Cardiac septum (tissue), 1 donor: ENCODE measurements at regions of chr3 and their contacts with region 1.

Region 1: DNA sequence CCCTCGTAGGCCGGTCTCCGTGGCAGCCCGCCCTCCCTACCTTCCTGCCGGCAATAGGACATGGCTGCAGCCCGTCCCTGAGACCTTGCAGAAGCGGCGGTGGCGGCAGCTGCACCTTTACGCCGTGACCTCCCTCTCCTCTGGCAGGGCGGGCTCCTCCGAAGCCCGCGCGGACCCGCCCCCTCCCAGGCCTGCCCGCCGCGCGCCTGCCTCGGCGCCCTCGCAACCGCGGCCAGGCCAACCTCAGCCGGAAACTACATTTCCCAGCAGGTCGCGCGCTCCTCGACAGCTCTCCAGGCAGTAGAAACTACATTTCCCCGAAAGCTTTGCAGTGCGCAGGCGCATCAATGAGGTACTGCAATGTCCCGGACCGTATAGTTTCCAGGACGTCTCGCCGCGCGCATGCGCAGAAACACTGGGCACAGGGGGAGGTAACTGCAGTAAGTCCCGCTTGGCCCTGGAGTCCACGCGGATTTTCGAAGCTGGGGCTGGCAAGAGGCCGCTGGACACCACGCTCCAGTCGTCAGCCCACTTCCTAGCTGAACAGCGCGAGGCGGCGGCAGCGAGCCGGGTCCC is at the starts of genes CHCHD4 and TMEM43:
- DNase-seq: peak; percentile 100
- total RNA-seq, gene CHCHD4: 23.0 TPM
- total RNA-seq, gene TMEM43: 62.0 TPM

Region 2: DNA sequence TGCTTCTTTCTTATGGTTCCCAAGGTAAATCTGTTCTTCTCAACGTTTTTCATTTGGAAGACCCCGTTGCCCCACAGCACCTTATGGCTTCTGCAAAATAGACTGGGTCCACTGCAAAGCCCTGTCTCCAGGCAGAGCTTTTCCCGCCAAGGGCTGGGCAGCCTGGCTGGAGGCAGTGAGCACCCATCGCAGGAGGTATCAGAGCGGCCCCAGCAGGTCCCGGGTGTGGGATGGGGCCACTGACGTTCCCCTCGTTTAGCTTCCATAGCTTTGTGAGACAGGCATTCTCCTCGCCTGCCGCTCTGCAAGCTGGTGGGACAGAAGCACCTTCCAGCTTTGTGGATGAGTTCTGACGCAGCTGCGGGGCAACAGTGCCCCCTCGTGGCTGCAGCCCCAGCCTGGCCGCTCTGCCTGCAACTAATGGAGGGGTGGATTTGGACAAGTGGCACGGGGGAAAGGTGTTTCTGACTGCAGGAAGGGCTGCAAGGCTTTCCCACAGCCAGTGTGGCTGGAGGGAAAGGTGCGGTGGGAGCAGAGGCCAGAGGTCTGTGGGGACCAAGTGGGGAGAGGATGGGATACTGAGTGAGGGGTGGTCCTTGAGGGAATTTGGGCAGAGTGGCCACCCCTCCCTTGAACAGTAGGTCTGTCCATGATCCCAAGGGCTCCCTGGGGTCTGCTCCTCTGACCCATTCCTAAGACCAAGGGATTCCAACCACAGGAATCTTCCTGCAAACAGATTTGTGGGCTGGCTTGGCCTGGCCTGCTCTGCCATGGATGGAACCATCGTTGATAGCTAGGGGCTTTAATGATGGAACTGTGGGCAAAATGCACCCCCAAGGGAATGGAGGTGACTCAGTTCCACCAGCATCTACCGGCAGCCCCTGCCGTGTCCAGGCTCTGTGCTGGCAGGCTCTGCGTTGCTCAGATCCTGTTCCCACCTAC is 476.4 kb before region 1 on chr3:
- intact Hi-C with region 1: loop called (anchors 10 kb)
- DNase-seq: peak; percentile 86

Region 3: DNA sequence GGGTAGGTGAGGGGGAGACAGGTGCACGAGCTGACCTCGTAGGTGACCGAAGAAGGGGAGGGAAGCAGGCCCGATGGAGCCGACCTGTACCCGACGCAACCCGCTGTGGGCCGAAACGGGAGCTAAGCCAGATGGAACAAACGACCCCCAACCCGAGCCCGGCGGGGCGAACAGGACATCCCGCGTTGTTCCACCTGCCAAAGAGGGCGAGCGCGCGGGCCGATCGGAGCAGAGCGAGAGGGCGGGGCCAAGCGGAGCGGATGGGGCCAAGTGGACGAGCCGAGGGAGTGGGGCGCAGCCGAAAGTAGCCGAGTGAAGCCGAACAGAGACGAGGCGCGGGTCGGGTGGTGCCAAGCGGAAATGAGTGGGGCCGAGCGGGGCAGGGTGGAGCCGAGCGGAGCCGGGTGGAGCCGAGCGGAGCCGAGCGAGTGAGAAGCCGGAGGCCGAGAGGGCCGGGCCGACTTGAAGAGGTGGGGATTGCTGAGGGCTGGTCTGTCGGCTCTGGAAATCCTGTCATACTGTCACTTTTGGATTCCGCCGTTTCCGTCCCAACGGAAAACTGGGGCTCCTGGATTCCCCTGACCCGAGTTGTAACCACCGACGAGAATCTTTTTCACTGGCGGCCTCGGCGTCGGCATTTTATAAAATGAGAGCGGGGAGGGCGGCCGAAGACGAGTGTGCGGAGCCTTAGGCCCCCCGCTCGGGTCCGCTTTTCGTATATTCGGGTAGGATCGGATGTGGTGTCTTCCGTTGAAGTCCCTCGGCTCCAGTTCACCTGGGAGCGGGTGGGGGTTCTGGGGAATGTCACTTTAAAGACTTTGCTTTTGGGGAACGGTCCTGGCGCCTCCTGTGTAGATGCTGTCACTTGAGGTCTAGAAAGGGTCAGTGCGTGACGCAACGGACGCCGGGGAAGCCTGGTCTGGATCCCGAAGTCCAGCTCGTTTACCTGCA is 229.3 kb before region 1 on chr3:
- intact Hi-C with region 1: loop called (anchors 2 kb)
- DNase-seq: peak; percentile 96

Region 4: GRCh38 chr3:14082108-14082657 is 42.5 kb before region 1 on chr3:
- intact Hi-C with region 1: no loop called
- DNase-seq: no peak

Region 5: GRCh38 chr3:14144423-14145075 is 19.8 kb after region 1 on chr3:
- intact Hi-C with region 1: loop called (anchors 1 kb)
- DNase-seq: peak; percentile 78

Region 6: DNA sequence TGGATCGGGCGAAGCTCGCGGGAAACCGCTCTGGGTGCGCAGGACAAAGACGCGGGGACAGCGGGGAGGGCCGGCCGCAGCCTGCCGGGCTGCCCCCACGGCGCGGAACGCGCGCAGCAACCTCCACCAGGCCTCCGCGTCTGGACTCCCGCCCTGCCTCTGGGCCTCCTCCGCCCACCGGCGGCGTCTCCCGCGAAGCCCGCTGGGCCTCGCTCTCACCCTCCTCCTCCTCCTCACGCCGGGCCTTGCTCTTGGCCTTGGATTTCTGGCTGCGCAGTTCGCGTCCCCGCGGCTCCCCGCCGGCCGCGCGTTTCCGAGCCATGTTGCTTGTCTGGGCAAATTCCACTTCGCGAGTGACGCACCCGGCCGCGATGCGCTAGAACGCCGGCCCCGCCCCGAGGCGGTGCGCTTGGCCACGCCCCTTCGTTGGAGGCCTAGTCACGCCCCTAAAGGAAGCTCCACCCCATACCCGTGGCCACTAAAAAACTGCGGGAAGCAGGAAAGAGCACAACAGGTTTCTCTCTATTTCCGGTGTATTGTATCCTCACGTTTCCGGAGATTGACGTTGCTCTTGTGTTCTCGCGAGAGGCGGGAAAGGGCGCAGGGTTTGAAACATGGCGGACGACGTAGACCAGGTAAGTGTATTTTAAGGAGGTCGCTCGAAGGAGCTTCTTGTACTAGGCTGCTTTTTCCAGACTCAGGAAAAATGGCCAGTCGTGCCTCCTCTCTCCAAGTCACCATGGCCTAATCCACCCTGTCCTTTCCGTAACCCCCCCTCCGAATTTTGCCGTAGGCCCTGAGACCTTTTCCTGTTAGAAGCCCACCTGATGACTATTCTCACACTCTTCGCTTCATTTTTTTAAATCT is 53.8 kb after region 1 on chr3 and contains the starts of genes LSM3 and XPC:
- intact Hi-C with region 1: loop called (anchors 1 kb)
- DNase-seq: peak; percentile 99
- total RNA-seq, gene LSM3: 13.2 TPM
- total RNA-seq, gene XPC: 16.7 TPM

Region 7: DNA sequence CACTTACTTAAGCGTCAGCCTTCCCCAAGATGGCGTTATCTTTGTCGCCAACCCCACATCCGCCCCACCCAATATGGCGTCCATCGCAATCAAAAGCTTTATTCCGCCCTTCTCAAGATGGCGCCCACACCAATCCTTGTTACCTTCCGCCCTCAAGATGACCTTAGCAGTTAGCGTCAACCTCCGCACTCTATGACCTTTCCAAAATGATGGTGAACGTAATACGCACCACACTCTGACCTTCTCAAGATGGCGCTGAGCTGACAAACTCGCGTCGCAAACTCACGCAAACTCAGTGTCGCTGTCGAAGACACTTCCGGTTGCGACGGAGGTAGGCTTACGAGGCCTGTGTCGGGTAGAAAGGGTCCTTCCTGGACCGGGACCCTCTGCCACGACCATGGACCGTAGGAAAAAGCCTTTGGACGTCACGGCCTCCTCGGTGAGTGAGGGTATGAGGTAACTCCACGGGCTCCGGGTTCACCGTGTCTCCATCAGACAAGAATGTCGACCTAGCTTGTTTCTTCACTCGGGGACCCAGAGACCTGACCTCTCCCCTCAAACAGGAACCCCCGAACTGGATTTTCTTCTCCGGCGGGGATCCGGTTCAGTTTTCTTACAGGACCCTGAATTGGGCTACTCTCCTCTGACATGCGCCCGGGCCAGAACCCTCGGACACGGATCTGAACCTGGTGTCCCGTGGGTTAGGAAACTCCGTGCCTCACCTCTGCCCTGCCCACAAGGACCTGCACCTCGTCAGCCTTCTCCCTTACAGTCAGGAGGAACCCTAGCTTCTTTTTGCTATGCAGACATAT is 526.9 kb after region 1 on chr3 and contains the start of gene CCDC174:
- intact Hi-C with region 1: loop called (anchors 5 kb)
- DNase-seq: peak; percentile 98
- total RNA-seq, gene CCDC174: 14.7 TPM